ENCODE measurements at regions of chr9 and their contacts with region 1.

Region 1: DNA sequence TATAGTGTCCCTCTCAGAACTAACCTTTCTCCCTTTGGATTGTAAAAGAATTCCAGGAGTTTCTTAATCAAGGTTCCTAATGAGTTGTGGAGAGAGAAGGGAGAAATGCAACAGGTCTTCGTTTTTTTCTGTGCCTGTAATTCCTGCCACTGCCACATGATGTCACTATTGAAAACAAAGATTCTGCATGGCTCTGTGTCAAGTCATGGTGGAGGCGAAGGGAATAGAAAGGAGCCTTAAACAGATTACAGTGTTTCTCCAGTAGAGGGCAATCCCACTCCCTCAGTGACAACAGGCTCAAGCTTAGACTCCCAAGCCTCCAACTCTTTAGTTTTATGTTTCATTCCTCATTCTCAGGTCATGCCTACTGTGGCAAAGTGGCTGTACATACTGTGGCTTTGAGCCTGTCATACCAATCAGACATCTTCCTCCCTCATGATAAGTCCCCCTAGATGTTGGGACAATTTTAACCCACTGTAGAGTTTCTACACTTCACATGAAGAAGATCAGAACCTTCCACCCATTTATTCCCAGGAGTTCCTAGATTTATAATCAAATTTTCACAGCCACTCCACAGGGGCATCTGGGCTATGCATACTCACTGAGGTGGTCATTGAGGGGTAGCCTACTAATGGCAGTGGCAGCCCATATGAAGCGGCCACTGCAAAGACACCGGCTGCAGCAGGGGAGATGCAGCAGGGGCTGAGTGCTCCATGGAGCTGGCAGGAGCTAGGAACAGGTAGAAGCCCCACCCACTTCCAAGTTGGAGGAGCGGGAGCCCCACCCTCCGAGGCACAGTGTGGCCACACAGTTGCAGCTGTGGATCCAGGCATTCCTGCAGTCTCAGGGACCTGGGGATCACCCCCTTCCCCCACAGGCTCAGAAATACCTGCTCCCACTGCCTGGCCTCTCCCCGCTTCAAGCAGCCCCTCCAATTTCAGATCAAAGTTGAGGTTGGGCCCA is 97.4 kb upstream of the TRIM32 start:
- DNase-seq: peak; percentile 56
- ATAC-seq: peak; percentile 91
- H3K4me3 Mint-ChIP-seq: no peak overlapping the region
- H3K27ac Mint-ChIP-seq: no peak overlapping the region
- H3K4me1 Mint-ChIP-seq: no peaks in the 10 kb centered on the region
- H3K27me3 Mint-ChIP-seq: no peaks in the 10 kb centered on the region

Region 2: GRCh38 chr9:116313638-116314037 is 276.0 kb before region 1 on chr9:
- CTCF ChIA-PET with region 1: no interaction called
- POLR2A ChIA-PET with region 1: no interaction called
- intact Hi-C with region 1: no loop called
- DNase-seq: no peak
- ATAC-seq: no peak
- H3K4me3 Mint-ChIP-seq: no peak overlapping the region
- H3K27ac Mint-ChIP-seq: no peak overlapping the region
- H3K4me1 Mint-ChIP-seq: no peaks in the 10 kb centered on the region
- H3K27me3 Mint-ChIP-seq: no peaks in the 10 kb centered on the region

Region 3: GRCh38 chr9:116646661-116647512 is 57.2 kb after region 1 on chr9:
- CTCF ChIA-PET with region 1: no interaction called
- POLR2A ChIA-PET with region 1: no interaction called
- intact Hi-C with region 1: loop called in 1 of 2 experiments (anchors 1 kb)
- DNase-seq: no peak
- ATAC-seq: peak; percentile 36
- H3K4me3 Mint-ChIP-seq: no peak overlapping the region
- H3K27ac Mint-ChIP-seq: no peak overlapping the region
- H3K4me1 Mint-ChIP-seq: no peaks in the 10 kb centered on the region
- H3K27me3 Mint-ChIP-seq: no peaks in the 10 kb centered on the region

Region 4: GRCh38 chr9:116661037-116661954 is 71.6 kb after region 1 on chr9:
- CTCF ChIA-PET with region 1: no interaction called
- POLR2A ChIA-PET with region 1: no interaction called
- intact Hi-C with region 1: loop called (anchors 1 to 2 kb)
- DNase-seq: no peak
- ATAC-seq: peak; percentile 58
- H3K4me3 Mint-ChIP-seq: no peak overlapping the region
- H3K27ac Mint-ChIP-seq: no peak overlapping the region
- H3K4me1 Mint-ChIP-seq: no peaks in the 10 kb centered on the region
- H3K27me3 Mint-ChIP-seq: no peaks in the 10 kb centered on the region

Region 5: DNA sequence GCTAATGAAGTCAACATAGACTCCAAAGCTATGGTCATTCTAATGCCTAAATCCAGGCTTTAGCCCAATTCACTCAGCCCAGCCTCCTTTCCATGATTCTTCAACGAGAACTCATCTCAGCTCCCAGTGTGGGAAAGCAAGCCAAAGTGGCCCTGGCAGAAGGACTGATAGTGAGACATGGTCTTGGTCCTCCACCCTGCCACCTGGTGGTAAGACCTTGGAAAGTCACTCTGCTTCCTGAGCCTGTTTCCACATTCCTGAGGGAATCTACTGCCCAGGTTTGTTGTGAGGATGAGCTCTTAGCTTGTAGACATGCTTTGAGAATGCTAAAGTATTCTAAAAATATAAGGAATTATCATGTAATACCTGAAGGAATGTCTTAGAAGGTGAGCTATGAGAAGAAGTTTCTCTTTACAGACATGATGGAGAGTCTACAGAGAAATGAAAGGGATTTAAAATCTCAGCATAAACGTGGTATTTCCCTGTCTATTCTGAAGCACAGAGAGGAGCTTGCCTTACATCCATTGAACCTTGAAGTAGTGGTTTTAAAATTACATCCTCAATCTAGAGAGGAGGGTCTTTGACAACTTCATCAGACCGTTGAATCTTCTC is 270.9 kb after region 1 on chr9:
- CTCF ChIA-PET with region 1: interaction called, 4 read pairs
- POLR2A ChIA-PET with region 1: no interaction called
- intact Hi-C with region 1: loop called in 1 of 2 experiments (anchors 1 kb)
- DNase-seq: peak; percentile 47
- ATAC-seq: no peak
- H3K4me3 Mint-ChIP-seq: no peak overlapping the region
- H3K27ac Mint-ChIP-seq: no peak overlapping the region
- H3K4me1 Mint-ChIP-seq: no peaks in the 10 kb centered on the region
- H3K27me3 Mint-ChIP-seq: peaks cover 3% of the 10 kb centered on the region

Measured in activated CD4-positive, alpha-beta T cell treated with anti-CD3 and anti-CD28 coated beads for 36 hours (primary cell).